Posterior vena cava (tissue), 2 donors: ENCODE measurements at regions of chr9 and their contacts with region 1.

Region 1: GRCh38 chr9:130834371-130835311 is at the start of gene ABL1:
- DNase-seq: peak; percentile 91
- total RNA-seq, gene ABL1: 80.5 to 85.0 TPM

Region 2: GRCh38 chr9:130794923-130795495 is 39.6 kb before region 1 on chr9:
- intact Hi-C with region 1: loop called in 1 of 2 experiments (anchors 5 kb)
- DNase-seq: no peak

Region 3: GRCh38 chr9:130805510-130806326 is 28.9 kb before region 1 on chr9:
- intact Hi-C with region 1: no loop called
- DNase-seq: no peak

Region 4: DNA sequence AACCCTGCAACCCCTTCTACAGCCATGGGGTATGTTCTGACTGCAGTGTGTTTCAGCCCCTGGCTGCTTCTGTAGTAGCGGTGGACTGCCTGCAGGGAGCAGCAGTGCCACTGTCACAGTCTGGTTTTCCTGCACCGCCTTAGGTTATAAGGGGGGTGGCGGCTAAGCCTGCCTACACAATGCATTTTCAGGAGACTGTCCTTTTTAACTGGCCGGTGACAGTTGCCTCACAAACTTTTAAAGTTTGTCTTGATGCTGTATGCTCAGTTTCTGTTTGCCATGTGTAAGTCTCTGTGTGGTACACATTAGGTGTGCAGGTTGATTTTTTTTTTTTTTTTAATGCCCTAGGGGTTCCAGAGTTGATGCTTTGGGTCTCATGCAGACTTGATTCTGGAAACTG is 343.7 kb after region 1 on chr9:
- intact Hi-C with region 1: no loop called
- DNase-seq: peak; percentile 85

Region 5: DNA sequence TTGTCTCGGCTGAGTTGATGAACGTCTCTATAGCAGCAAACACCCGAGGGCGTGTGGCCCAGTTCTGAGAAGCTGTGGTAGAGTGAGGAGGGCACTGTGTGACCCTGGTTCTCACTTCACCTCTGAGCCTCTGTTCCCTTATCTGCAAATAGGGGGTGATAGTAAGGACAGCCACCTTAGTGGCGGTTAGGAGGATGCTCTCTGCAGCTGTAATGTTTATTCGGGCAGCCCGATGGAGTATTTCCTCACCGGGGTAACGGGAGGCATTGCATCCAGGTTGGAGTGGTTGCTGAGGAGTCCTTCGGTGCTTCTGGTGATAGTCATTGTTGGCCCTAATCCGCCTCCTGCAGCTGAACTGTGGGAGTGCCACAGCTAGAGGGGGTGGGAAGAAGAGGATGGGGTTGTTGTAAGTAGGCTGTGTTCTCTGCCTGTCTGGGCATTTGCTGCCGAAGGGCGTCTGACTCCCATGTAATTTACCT is 573.1 kb after region 1 on chr9:
- intact Hi-C with region 1: loop called in 1 of 2 experiments (anchors 5 kb)
- DNase-seq: no peak